H1 (cell line): ENCODE measurements at regions of chr3 and their contacts with region 1.

Region 1: GRCh38 chr3:29892976-29893554 is 612.2 kb downstream of the RBMS3 start:
- DNase-seq: no peak
- H3K4me3 ChIP-seq: no peak overlapping the region
- H3K27ac ChIP-seq: no peak overlapping the region
- H3K4me1 ChIP-seq: no peaks in the 10 kb centered on the region
- H3K27me3 ChIP-seq: no peaks in the 10 kb centered on the region
- CTCF ChIP-seq: no peak
- EP300 ChIP-seq: no peak
- POLR2A ChIP-seq: no peak
- RAD21 ChIP-seq: no peak

Region 2: DNA sequence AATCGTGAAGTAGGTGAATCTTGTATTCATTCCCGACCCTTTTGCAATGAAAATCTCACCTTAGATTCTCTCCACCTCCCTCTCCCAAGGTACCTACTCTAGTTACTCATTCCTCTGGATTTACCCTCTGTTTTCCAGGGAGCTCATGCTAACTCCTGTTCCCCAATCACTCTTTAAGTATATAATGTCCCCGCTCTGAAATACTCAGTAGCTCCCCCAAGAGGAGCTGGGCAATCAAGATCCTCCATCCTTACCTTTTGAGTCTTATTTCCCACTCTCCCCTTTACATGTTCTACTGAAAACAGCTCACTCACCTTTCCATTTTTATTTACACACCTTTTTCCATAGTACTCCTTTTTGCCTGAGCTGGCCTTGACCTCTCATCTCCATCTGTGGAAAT is 12.3 kb before region 1 on chr3:
- CTCF ChIA-PET with region 1: interaction called, 14 read pairs
- POLR2A ChIA-PET with region 1: no interaction called
- DNase-seq: no peak
- H3K4me3 ChIP-seq: no peak overlapping the region
- H3K27ac ChIP-seq: no peak overlapping the region
- H3K4me1 ChIP-seq: no peaks in the 10 kb centered on the region
- H3K27me3 ChIP-seq: no peaks in the 10 kb centered on the region
- CTCF ChIP-seq: peak in 2 of 3 experiments; percentile 8 to 50; a peak in 2 of 4 replicates
- EP300 ChIP-seq: no peak
- POLR2A ChIP-seq: no peak
- RAD21 ChIP-seq: peak; percentile 24 to 26; a peak in 1 of 4 replicates

Region 3: DNA sequence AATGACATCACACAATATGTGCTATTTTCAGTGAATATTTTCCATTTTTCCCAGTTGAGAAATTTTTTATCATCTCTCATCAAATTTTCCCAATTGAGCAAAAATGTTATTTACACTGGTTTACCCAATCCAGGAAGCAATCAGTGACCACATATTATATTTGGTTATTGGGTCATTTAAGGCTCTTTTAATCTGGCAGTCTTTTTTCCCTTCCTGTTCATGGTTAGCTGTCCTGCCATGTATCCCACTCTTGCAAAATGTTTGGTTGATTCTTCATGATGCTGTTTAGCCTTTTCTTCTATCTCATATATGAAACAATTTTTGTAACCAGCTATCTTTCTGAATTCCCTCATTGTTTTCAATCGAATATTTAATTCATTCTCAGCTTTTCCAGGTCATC is 13.8 kb after region 1 on chr3:
- CTCF ChIA-PET with region 1: no interaction called
- POLR2A ChIA-PET with region 1: no interaction called
- DNase-seq: no peak
- H3K4me3 ChIP-seq: no peak overlapping the region
- H3K27ac ChIP-seq: no peak overlapping the region
- H3K4me1 ChIP-seq: no peaks in the 10 kb centered on the region
- H3K27me3 ChIP-seq: no peaks in the 10 kb centered on the region
- CTCF ChIP-seq: no peak
- EP300 ChIP-seq: no peak
- POLR2A ChIP-seq: no peak
- RAD21 ChIP-seq: no peak

Region 4: DNA sequence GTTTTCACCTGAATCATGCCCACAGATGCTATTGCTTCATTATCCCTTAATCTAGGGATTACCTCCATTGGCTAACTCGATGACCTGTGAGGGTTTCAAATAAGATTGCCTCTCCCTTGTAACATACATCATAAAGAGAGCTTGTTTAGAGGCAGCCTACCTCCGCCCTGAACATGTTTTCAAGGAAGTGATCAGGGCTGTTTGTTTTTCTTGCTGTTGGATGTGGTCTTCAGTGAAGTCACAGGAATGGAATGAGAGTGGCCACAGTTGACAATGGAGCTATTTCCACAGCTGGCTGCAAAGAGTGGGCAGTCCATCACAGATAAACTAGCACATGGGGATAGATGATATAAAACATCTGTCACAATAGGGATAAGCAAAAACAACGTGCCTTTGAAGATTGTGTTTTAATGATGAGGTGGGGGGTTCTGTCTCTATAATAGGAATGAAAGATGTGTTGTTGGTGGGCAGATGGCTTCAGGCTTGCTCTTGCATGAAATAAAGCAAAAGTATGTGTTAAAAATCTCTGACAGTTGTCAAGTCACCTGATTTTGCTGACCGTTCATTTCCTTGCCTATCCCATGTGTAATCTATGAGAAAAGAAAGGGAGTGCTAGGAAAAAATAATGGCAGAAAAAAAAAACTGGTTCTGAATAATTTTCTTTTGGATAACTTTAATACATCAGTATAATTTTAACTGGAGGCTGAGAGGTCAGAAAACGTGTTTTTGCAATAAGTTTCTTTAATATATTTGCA is 30.1 kb after region 1 on chr3:
- CTCF ChIA-PET with region 1: no interaction called
- POLR2A ChIA-PET with region 1: no interaction called
- DNase-seq: peak in 1 of 2 experiments; percentile 1
- H3K4me3 ChIP-seq: no peak overlapping the region
- H3K27ac ChIP-seq: no peak overlapping the region
- H3K4me1 ChIP-seq: no peaks in the 10 kb centered on the region
- H3K27me3 ChIP-seq: no peaks in the 10 kb centered on the region
- CTCF ChIP-seq: no peak
- EP300 ChIP-seq: no peak
- POLR2A ChIP-seq: no peak
- RAD21 ChIP-seq: no peak